ENCODE measurements at regions of chr1 and their contacts with region 1.

Region 1: DNA sequence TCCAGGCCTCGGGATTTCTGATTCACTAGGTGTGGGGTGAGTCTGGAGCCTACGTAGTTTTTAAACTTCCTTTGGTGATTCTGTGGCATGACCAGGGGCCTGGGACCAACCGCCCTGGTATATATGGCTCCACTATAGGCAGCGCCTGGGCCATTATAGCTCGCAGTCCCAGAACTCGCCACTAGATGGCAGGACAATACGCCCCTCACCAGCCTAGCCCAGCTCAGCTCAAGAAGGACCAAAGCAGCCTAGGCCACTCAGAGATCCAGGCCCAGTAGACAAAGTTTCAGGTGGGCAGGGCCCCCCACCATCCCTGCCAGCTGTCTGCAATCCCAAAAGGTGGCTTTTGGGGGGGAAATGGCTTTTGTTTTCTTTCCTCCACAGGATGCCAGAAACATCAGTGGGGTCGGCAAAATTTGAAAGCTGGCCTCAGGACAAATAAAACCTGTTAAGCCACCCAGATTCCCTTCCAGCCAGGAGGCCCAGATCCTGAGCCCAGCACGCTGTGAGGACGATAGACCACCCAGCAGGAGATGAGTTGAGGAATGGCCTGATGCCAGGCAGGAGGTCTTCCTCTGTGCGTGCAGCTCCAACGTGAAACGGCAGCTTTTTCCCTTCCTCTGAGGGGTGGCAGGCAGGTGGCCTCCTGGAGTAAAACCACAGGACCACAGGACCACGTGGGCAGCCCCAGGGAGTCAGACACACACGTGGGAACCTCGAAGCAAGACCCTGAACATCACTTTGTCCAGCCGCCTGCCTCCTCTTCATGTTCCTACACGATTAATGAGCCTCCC is 24.8 kb upstream of the TMEM51 start:
- DNase-seq: peak; percentile 81

Region 2: GRCh38 chr1:14765773-14766172 is 362.9 kb before region 1 on chr1:
- in situ Hi-C with region 1: no loop called
- DNase-seq: no peak

Region 3: GRCh38 chr1:15046487-15047165 is 82.1 kb before region 1 on chr1:
- in situ Hi-C with region 1: no loop called
- DNase-seq: peak; percentile 92

Region 4: DNA sequence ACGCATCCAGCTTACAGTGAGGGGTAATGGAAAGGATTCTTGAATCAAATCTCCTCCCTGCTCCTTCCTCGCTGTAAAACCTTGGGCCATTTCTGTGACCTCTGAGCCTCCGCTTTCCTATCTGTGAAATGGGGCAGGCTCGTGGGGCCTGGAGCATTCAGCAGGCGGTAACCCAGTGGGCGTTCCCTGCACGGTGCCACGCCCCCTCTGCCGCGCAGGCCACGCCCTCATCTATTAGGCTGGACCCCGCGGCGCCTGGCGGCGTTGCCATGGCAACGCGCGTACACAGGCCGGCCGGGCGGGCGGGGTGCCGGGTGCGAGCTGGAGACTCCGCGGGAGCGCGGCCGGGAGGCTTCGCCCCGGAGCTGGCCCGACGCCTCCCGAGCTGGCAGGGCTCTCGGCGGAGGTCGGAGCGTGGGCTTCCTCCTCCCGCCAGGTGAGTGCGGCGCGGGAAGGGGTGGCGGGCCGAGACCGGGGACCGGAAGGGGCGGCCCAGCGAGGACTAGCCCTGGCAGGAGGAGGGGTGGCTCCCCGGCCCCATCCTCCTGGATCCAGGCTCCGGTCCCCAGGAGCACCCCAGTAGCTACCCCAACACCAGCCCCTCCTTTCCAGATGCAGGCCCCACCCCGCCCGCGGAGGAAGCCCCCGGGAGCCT is 118.4 kb after region 1 on chr1 and contains the start of gene FHAD1:
- in situ Hi-C with region 1: loop called (anchors 25 kb)
- DNase-seq: peak; percentile 21
- total RNA-seq, gene FHAD1: 13.7 and 24.0 TPM in 2 replicates